Transverse colon (tissue), 4 donors: ENCODE measurements at regions of chr12 and their contacts with region 1.

Region 1: DNA sequence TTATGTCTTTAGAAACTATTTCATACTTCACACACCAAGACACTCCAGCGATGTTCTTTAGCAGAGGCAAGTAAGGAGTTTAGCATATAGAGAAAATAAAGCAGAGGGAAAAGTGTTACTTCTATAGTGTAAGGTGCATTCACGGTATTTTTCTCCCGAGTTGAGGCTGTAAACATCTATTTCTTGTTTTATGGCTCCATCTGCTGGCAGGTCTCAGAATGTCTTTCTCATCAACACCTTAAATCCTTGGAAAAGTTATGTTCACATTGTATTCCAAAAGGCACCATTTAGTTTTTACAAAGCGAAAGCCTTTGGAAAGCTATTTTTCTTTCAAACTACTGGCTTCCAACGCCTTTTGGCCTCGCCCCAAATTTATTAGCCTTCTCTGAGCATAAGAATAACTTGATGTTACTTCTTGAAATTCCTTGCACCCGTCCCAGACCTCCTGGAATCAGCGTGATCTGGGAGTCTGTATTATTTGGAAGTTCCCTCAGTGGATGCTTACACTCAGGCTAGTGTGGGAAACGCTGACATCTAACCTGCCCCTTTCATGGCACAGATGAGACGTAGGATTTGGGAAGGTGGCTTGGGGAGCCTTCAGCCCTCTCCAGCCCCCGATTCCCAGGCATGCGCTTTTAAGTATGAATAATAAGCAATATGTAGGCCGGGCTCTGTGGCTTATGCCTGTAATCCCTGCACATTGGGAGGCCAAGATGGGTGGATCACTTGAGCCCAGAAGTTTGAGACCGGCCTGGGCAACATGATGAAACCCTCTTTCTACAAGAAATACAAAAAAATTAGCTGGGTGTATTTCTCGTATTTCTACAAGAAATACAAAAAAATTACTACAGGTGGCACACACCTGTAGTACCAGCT is 1.9 kb upstream of the PIWIL1 start:
- DNase-seq: peak; percentile 31
- H3K4me3 ChIP-seq: no peak overlapping the region
- H3K27ac ChIP-seq: no peak overlapping the region
- H3K4me1 ChIP-seq: peaks cover 0 to 16% (median 10%) of the 10 kb centered on the region in 4 donors
- H3K27me3 ChIP-seq: peaks cover 21% of the 10 kb centered on the region
- CTCF ChIP-seq: peak; percentile 59 to 71 (median 65)
- EP300 ChIP-seq: no peak
- POLR2A ChIP-seq: no peak

Region 2: GRCh38 chr12:130041983-130042812 is 293.6 kb before region 1 on chr12:
- in situ Hi-C with region 1: loop called in 3 of 4 experiments (anchors 5 to 10 kb)
- intact Hi-C with region 1: loop called (anchors 5 kb)
- DNase-seq: peak; percentile 17
- H3K4me3 ChIP-seq: no peak overlapping the region
- H3K27ac ChIP-seq: no peak overlapping the region
- H3K4me1 ChIP-seq: no peaks in the 10 kb centered on the region
- H3K27me3 ChIP-seq: peaks cover 48% of the 10 kb centered on the region
- CTCF ChIP-seq: peak; percentile 44 to 66 (median 58)
- EP300 ChIP-seq: no peak
- POLR2A ChIP-seq: no peak

Region 3: GRCh38 chr12:130053651-130054069 is 282.1 kb before region 1 on chr12:
- in situ Hi-C with region 1: loop called in 3 of 4 experiments (anchors 5 to 10 kb)
- intact Hi-C with region 1: loop called (anchors 5 kb)
- DNase-seq: no peak
- H3K4me3 ChIP-seq: no peak overlapping the region
- H3K27ac ChIP-seq: no peak overlapping the region
- H3K4me1 ChIP-seq: no peaks in the 10 kb centered on the region
- H3K27me3 ChIP-seq: no peaks in the 10 kb centered on the region
- CTCF ChIP-seq: no peak
- EP300 ChIP-seq: no peak
- POLR2A ChIP-seq: no peak